GM12878 (cell line): ENCODE measurements at regions of chr6 and their contacts with region 1.

Region 1: GRCh38 chr6:43769526-43770416 is at the start of gene VEGFA:
- DNase-seq: peak; percentile 64
- ATAC-seq: peak; percentile 68
- H3K4me3 ChIP-seq: peak within 1 kb of the TSS; percentile 98
- H3K27ac ChIP-seq: peak within 1 kb of the TSS; percentile 88
- H3K4me1 ChIP-seq: peaks cover 14% of the 10 kb centered on the region
- H3K27me3 ChIP-seq: no peaks in the 10 kb centered on the region
- CTCF ChIP-seq: peak; percentile 97 to 99 (median 98)
- EP300 ChIP-seq: no peak
- POLR2A ChIP-seq: peak; percentile 90
- RAD21 ChIP-seq: peak; percentile 98
- polyA plus RNA-seq, gene VEGFA: 2.9 to 4.3 TPM

Region 2: DNA sequence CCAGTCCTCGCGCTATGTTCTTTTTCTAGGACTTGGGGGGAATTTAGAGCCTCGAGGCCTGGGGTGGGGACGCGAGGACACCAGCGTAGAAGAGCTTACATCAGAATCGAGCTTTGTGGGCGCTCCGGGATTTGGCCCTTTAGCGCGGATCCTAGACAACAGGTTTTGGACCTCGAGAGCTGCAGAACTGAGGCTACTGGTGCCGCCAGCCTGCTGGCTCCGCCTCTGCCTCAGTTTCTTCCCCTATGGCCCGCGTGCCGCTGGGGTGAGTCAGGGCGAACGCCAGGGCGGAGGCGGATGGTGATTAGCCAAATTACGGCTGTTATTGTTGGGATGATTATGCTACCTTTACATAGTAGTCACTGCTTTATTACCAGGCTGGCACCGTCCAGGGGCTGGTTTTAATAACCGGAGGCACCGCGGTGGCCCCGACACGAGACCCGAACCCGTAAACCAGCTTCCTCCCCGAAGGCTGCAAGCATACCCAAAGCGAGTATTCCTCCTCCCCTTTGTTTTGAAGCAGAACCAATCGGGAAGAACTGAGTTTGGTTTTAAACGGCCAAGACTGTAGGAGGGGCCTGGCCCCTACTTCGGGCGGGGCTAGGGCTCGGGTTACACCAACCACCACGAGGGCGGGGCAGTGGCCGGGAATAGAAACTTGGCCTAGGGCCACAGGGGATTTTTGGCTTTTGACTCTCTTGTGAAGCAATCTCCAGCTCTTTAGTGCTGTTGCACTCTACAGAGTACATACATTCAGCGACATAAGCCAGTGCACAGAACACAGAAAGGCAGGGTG is 140.1 kb before region 1 on chr6:
- CTCF ChIA-PET with region 1: interaction called, 4 read pairs
- POLR2A ChIA-PET with region 1: interaction called, 10 read pairs
- RAD21 ChIA-PET with region 1: interaction called, 5 read pairs
- SMC1A ChIA-PET with region 1: interaction called, 3 read pairs
- in situ Hi-C with region 1: no loop called
- intact Hi-C with region 1: no loop called
- DNase-seq: peak; percentile 96
- ATAC-seq: peak; percentile 86
- H3K4me3 ChIP-seq: peak overlapping the region; percentile 80
- H3K27ac ChIP-seq: peak overlapping the region; percentile 99
- H3K4me1 ChIP-seq: peaks cover 20% of the 10 kb centered on the region
- H3K27me3 ChIP-seq: no peaks in the 10 kb centered on the region
- CTCF ChIP-seq: no peak
- EP300 ChIP-seq: 0 out of 4 replicates have a peak, but pooled peaks have one; percentile 42 to 48
- POLR2A ChIP-seq: peak; percentile 83
- RAD21 ChIP-seq: no peak

Region 3: DNA sequence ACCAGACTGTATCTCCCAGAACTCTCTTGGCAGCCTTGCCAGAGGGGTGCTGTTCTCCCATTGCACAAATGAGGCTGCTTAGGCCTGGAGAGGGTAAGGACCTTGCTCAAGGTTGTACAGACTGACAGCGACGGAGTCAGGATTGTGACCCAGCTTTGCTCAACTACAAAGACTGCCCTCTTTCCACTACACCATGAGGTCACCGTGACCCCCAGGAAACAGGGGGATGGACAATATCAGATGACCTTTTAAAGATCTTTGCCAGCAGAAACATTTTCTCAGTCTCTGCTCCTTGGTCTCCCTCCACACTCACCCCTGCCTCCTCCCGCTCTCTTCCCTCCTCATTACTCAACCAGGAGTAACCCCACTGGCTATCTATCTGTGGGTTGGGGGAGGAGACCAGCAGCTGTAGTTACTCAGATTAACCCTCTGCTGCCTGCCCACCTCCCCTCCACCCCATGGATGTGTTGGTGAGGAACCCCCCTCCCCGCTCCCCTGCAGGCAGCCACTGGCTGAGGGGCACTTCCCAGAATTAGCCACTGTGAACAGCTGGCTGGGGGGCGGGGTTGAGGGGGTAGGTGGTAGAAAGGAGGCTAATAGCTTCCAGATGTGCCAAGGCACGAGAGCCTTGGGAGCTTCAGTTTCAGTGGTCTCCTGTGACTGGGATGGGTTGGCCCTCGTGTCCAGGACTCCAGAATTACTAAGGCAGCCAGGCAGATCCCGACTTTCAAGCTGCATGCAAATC is 55.3 kb before region 1 on chr6:
- CTCF ChIA-PET with region 1: interaction called, 10 read pairs
- POLR2A ChIA-PET with region 1: interaction called, 4 read pairs
- RAD21 ChIA-PET with region 1: interaction called, 7 read pairs
- SMC1A ChIA-PET with region 1: interaction called, 4 read pairs
- in situ Hi-C with region 1: no loop called
- intact Hi-C with region 1: no loop called
- DNase-seq: no peak
- ATAC-seq: peak; percentile 54
- H3K4me3 ChIP-seq: peak overlapping the region; percentile 41
- H3K27ac ChIP-seq: peak overlapping the region; percentile 75
- H3K4me1 ChIP-seq: peaks cover 33% of the 10 kb centered on the region
- H3K27me3 ChIP-seq: no peaks in the 10 kb centered on the region
- CTCF ChIP-seq: no peak
- EP300 ChIP-seq: no peak
- POLR2A ChIP-seq: no peak
- RAD21 ChIP-seq: no peak

Region 4: DNA sequence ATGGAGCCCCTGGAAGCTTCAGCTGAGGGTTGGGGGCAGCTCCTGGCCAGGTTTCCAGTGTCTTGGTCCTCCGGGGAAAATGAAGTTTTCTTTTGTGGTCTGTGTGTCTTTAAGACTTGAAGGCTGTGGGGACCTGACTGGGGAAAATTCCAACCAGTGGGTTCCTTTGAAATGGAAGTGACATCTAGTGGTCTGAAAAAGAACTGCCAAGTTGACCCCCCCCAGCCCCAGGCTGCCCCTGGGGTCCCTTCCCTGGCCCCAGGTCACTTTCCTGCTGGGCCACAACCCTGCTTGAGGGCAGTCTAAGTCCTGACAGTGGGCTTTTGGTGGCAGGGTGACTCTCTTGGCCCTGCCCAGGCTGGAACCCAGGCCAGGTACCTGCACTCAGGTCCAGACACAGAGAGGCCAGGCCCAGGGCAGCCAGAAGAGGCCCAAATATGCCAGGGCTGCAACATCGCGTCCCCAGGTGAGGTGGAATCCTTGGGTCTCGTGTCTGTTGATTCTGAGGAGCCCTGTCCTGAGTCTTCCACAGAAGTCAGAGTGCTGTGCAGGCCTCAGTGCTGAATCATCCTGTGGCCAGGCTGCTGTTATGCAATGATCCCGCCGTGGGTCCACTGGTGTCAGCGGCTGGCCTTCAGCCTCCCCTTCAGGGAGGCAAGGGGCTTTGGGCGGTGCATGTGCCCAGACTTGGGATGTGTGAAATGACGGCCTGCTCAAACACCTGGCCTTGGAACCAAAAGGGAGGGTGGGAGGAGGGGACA is 68.7 kb after region 1 on chr6:
- CTCF ChIA-PET with region 1: interaction called, 22 read pairs
- POLR2A ChIA-PET with region 1: interaction called, 4 read pairs
- RAD21 ChIA-PET with region 1: interaction called, 14 read pairs
- SMC1A ChIA-PET with region 1: interaction called, 14 read pairs
- in situ Hi-C with region 1: no loop called
- intact Hi-C with region 1: loop called (anchors 1 kb)
- DNase-seq: no peak
- ATAC-seq: peak; percentile 86
- H3K4me3 ChIP-seq: no peak overlapping the region
- H3K27ac ChIP-seq: no peak overlapping the region
- H3K4me1 ChIP-seq: no peaks in the 10 kb centered on the region
- H3K27me3 ChIP-seq: no peaks in the 10 kb centered on the region; a peak in 1 of 4 replicates
- CTCF ChIP-seq: peak; percentile 52 to 63 (median 60)
- EP300 ChIP-seq: no peak
- POLR2A ChIP-seq: no peak
- RAD21 ChIP-seq: peak; percentile 54

Region 5: GRCh38 chr6:43951063-43951755 is 181.4 kb after region 1 on chr6:
- CTCF ChIA-PET with region 1: interaction called, 26 read pairs
- POLR2A ChIA-PET with region 1: interaction called, 4 read pairs
- RAD21 ChIA-PET with region 1: interaction called, 11 read pairs
- SMC1A ChIA-PET with region 1: interaction called, 8 read pairs
- in situ Hi-C with region 1: no loop called
- intact Hi-C with region 1: loop called (anchors 5 kb)
- DNase-seq: no peak
- ATAC-seq: peak; percentile 88
- H3K4me3 ChIP-seq: no peak overlapping the region
- H3K27ac ChIP-seq: no peak overlapping the region
- H3K4me1 ChIP-seq: no peaks in the 10 kb centered on the region
- H3K27me3 ChIP-seq: no peaks in the 10 kb centered on the region
- CTCF ChIP-seq: peak; percentile 36 to 51 (median 41); a peak in 4 of 6 replicates
- EP300 ChIP-seq: no peak
- POLR2A ChIP-seq: no peak
- RAD21 ChIP-seq: peak; percentile 42; the same call in 1 of the 2 replicates

Region 6: DNA sequence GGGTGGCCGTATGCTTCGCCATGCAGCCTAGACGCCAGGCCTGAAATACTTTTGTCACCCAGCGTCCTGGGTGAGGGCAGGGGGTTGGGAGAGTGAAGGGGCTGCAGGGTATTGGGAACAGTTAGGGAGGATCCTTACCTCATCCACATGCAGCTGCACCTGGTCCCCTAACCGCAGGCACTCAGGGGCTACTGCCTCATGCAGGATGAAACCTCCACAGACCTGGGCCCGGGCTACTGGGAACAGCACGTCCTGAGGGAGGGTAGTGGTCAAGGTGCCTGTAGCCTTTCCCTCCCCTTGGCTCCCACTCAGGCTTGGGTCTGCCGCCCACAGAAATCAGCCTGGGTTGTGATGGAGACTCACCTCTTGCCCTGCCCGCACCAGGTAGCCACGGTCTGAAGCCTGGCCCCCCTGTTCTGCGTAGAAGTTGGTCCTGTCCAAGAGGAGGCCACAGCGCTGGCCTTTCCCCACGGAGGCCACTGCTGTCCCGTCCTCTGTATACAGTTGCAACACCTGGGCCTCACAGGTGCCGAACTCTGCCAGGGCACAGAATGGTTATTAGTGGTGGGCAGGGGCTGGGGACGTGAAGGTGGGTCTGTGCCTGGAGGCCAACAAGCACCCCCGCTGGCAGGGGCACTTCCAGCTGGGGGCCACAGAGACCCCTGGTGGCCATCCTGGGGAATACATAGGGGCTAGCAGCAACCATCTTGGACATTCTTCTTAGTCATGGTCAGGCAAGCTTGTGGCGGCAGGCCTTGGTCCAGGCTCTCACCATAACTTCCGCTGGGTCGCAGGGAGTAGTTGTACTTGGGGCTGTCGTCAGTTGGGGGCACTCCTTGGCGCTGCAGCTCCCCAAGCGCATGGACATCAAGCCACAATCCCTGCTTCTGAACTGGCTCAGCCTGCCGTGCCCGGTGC is 534.8 kb after region 1 on chr6:
- CTCF ChIA-PET with region 1: no interaction called
- POLR2A ChIA-PET with region 1: no interaction called
- RAD21 ChIA-PET with region 1: no interaction called
- SMC1A ChIA-PET with region 1: no interaction called
- in situ Hi-C with region 1: no loop called
- intact Hi-C with region 1: no loop called
- DNase-seq: no peak
- ATAC-seq: peak; percentile 86
- H3K4me3 ChIP-seq: no peak overlapping the region
- H3K27ac ChIP-seq: no peak overlapping the region
- H3K4me1 ChIP-seq: no peaks in the 10 kb centered on the region
- H3K27me3 ChIP-seq: no peaks in the 10 kb centered on the region
- CTCF ChIP-seq: peak; percentile 74 to 88 (median 75)
- EP300 ChIP-seq: no peak
- POLR2A ChIP-seq: 0 out of 2 replicates have a peak, but pooled peaks have one; percentile 36
- RAD21 ChIP-seq: peak; percentile 51